Natural killer cell (primary cell): ENCODE measurements at regions of chrX and their contacts with region 1.

Region 1: GRCh38 chrX:40097497-40098263 is at the start of gene BCOR:
- DNase-seq: peak; percentile 56 to 86
- ATAC-seq: peak; percentile 35 to 61 (median 52)
- H3K4me3 ChIP-seq: peak within 1 kb of the TSS; percentile 58
- H3K4me3 Mint-ChIP-seq: peak within 1 kb of the TSS; percentile 91
- H3K27ac ChIP-seq: peak within 1 kb of the TSS; percentile 78
- H3K27ac Mint-ChIP-seq: peak within 1 kb of the TSS; percentile 85 to 89
- H3K4me1 ChIP-seq: peaks cover 31% of the 10 kb centered on the region
- H3K4me1 Mint-ChIP-seq: peaks cover 31 to 35% of the 10 kb centered on the region in 2 donors
- H3K27me3 ChIP-seq: no peaks in the 10 kb centered on the region
- H3K27me3 Mint-ChIP-seq: peaks cover 0 to 11% of the 10 kb centered on the region in 2 donors
- CTCF ChIP-seq: no peak
- total RNA-seq, gene BCOR: 20.0 to 35.2 (median 29.2) TPM

Region 2: GRCh38 chrX:40006106-40007017 is 91.3 kb before region 1 on chrX:
- intact Hi-C with region 1: loop called (anchors 5 kb)
- DNase-seq: peak in 1 of 2 donors; percentile 42
- ATAC-seq: peak in 2 of 3 donors; percentile 39 to 48
- H3K4me3 ChIP-seq: no peak overlapping the region
- H3K4me3 Mint-ChIP-seq: peak overlapping the region; percentile 2
- H3K27ac ChIP-seq: no peak overlapping the region
- H3K27ac Mint-ChIP-seq: no peak overlapping the region
- H3K4me1 ChIP-seq: peaks cover 43% of the 10 kb centered on the region
- H3K4me1 Mint-ChIP-seq: peaks cover 0 to 20% of the 10 kb centered on the region in 2 donors
- H3K27me3 ChIP-seq: peaks cover 22% of the 10 kb centered on the region
- H3K27me3 Mint-ChIP-seq: peaks cover 46 to 52% of the 10 kb centered on the region in 2 donors
- CTCF ChIP-seq: no peak

Region 3: GRCh38 chrX:40153335-40154249 is 55.9 kb after region 1 on chrX:
- intact Hi-C with region 1: loop called (anchors 5 kb)
- DNase-seq: peak in 1 of 2 donors; percentile 84
- ATAC-seq: peak; percentile 52 to 62 (median 57)
- H3K4me3 ChIP-seq: peak overlapping the region; percentile 37
- H3K4me3 Mint-ChIP-seq: peak overlapping the region; percentile 85
- H3K27ac ChIP-seq: no peak overlapping the region
- H3K27ac Mint-ChIP-seq: peak overlapping the region in 1 of 2 donors; percentile 63
- H3K4me1 ChIP-seq: peaks cover 62% of the 10 kb centered on the region
- H3K4me1 Mint-ChIP-seq: peaks cover 8 to 17% of the 10 kb centered on the region in 2 donors
- H3K27me3 ChIP-seq: no peaks in the 10 kb centered on the region
- H3K27me3 Mint-ChIP-seq: peaks cover 6 to 19% of the 10 kb centered on the region in 2 donors
- CTCF ChIP-seq: no peak

Region 4: GRCh38 chrX:40169193-40170101 is 71.8 kb after region 1 on chrX:
- intact Hi-C with region 1: loop called (anchors 2 kb)
- DNase-seq: peak; percentile 60 to 89
- ATAC-seq: peak; percentile 67 to 82 (median 70)
- H3K4me3 ChIP-seq: peak overlapping the region; percentile 20
- H3K4me3 Mint-ChIP-seq: peak overlapping the region; percentile 78
- H3K27ac ChIP-seq: peak overlapping the region; percentile 92
- H3K27ac Mint-ChIP-seq: peak overlapping the region; percentile 63 to 93
- H3K4me1 ChIP-seq: peaks cover 79% of the 10 kb centered on the region
- H3K4me1 Mint-ChIP-seq: peaks cover 35 to 48% of the 10 kb centered on the region in 2 donors
- H3K27me3 ChIP-seq: no peaks in the 10 kb centered on the region
- H3K27me3 Mint-ChIP-seq: peaks cover 21 to 33% of the 10 kb centered on the region in 2 donors
- CTCF ChIP-seq: peak; percentile 15

Region 5: DNA sequence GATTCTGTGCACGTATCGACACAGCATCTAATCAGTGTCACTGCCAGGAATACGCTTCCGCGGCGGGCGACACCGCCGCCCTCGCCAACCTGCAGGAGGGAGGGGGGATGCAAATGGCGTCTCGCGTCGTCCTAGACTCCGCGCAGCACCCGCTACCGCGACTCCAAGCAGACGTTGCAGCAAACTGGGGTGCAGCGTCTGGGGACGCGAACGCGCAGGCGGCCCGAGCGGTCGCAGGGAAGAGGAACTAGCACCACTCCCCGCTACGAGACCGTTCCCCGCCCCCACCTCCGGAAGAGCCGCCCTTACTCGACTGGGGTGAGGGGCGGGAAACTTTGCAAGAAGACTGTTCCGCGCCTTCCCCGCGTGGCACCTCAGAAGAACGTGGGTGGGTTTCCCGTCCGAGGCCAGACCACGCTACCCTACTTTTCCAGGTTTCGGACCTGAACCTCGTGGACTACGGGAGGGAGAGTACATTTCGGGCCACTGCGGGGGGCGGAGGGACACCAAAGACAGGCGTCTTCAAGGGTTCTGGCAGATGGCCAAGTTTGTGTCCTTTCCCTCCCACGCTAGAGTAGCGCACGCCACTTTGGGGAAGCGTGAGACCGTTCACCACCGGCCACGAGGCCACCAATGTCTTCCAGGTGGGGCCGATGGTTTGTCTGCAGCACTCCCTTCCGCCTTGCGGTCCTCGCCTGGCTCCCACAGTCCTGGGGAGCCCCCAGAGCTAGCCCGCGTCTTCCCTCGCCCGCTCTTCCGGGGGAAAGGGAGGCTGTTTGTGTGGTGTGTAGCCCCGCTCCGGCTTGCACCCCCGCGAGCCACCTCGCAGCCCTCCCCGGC is 78.1 kb after region 1 on chrX:
- intact Hi-C with region 1: loop called (anchors 2 kb)
- DNase-seq: peak; percentile 62 to 90
- ATAC-seq: peak; percentile 39 to 75 (median 47)
- H3K4me3 ChIP-seq: peak overlapping the region; percentile 85
- H3K4me3 Mint-ChIP-seq: peak overlapping the region; percentile 78
- H3K27ac ChIP-seq: peak overlapping the region; percentile 99
- H3K27ac Mint-ChIP-seq: peak overlapping the region; percentile 93
- H3K4me1 ChIP-seq: peaks cover 56% of the 10 kb centered on the region
- H3K4me1 Mint-ChIP-seq: peaks cover 30 to 34% of the 10 kb centered on the region in 2 donors
- H3K27me3 ChIP-seq: no peaks in the 10 kb centered on the region
- H3K27me3 Mint-ChIP-seq: peaks cover 0 to 7% of the 10 kb centered on the region in 2 donors
- CTCF ChIP-seq: no peak

Region 6: GRCh38 chrX:40278340-40279090 is 180.8 kb after region 1 on chrX:
- intact Hi-C with region 1: loop called (anchors 5 kb)
- DNase-seq: peak; percentile 63 to 82
- ATAC-seq: peak; percentile 76 to 88 (median 84)
- H3K4me3 ChIP-seq: no peak overlapping the region
- H3K4me3 Mint-ChIP-seq: peak overlapping the region; percentile 63
- H3K27ac ChIP-seq: peak overlapping the region; percentile 56
- H3K27ac Mint-ChIP-seq: peak overlapping the region; percentile 85 to 95
- H3K4me1 ChIP-seq: peaks cover 41% of the 10 kb centered on the region
- H3K4me1 Mint-ChIP-seq: peaks cover 33% of the 10 kb centered on the region in 2 donors
- H3K27me3 ChIP-seq: no peaks in the 10 kb centered on the region
- H3K27me3 Mint-ChIP-seq: peaks cover 2 to 19% of the 10 kb centered on the region in 2 donors
- CTCF ChIP-seq: no peak